Transverse colon (tissue), 4 donors: ENCODE measurements at regions of chr11 and their contacts with region 1.

Region 1: DNA sequence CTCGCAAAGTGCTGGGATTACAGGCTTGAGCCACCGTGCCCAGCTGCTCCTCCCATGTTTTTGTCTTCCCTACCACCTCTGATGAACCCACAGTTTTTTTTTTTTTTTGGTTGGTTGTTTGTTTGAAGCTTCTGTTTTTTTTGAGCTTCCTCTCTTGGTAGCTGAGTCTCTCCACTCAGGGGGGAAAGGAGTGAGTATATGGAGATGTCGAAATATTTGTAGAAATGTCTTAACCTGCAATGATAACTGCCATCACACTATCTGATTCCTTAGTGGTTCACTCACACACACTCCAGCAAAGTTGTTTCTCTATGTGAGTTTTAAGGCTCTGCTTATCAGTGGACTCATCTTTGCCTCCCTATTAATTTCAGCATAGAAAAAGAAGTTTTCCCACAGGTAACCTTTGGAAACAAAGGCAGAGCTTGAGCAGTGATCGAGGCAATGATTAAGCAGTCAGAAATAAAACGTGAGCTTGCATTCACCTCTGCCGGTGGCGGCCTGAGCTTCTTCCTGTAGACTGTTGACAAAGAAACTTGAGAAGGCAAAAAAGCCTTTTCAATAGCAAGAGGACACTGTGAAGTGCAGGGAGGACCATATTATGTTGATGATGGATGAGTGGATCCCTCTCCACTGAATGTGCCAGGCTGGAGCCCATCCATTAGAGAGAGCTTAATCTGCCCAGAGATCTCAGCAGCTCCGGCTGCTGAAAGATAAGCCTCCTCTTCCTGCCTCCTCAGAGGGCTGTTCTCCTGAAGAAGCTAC is 29.0 kb upstream of the RASSF10 start:
- DNase-seq: no peak
- H3K4me3 ChIP-seq: no peak overlapping the region
- H3K27ac ChIP-seq: no peak overlapping the region
- H3K4me1 ChIP-seq: no peaks in the 10 kb centered on the region
- H3K27me3 ChIP-seq: no peaks in the 10 kb centered on the region
- CTCF ChIP-seq: no peak
- EP300 ChIP-seq: no peak
- POLR2A ChIP-seq: no peak

Region 2: GRCh38 chr11:12809864-12810567 is 170.1 kb before region 1 on chr11:
- in situ Hi-C with region 1: no loop called
- intact Hi-C with region 1: no loop called
- DNase-seq: no peak
- H3K4me3 ChIP-seq: no peak overlapping the region
- H3K27ac ChIP-seq: no peak overlapping the region
- H3K4me1 ChIP-seq: peaks cover 14 to 40% (median 22%) of the 10 kb centered on the region in 4 donors
- H3K27me3 ChIP-seq: no peaks in the 10 kb centered on the region
- CTCF ChIP-seq: no peak
- EP300 ChIP-seq: no peak
- POLR2A ChIP-seq: no peak

Region 3: DNA sequence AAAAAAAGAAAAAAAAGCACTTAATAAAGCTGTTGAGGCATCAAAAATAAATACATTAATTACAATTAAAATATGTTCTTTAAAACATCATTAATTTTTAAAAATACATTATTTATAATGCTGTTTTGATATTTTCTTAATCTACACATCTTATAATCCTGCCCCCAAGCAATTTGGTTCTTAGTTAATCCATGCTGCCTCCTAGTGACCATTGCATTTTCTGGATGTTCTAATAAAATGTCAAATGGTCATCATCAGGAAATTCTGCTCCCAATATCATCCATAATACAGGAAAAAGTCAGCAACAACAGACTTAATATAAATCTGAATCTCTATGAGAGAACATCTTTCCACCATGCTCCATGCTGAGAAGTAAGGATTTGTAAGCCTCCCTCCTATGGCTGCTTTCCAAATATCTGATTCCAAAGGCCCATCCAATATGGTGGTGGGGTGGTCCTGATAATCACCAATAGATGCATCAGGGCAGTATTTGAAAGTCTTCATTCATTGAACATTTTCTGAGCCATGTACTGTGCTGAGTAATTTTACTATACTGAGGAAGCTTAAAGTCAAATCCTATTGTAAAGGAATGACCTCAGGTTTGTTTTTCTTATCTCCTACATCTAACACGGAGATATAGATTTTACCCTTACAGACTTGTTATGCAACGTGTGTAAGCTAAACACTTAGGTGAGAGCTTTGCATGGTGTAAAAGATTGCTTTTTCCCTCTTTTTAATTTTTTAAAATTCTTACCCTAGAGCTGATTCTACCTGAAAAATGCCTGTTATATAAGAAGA is 172.8 kb after region 1 on chr11:
- in situ Hi-C with region 1: loop called in 1 of 4 experiments (anchors 10 kb)
- intact Hi-C with region 1: no loop called
- DNase-seq: no peak
- H3K4me3 ChIP-seq: no peak overlapping the region
- H3K27ac ChIP-seq: no peak overlapping the region
- H3K4me1 ChIP-seq: no peaks in the 10 kb centered on the region
- H3K27me3 ChIP-seq: no peaks in the 10 kb centered on the region
- CTCF ChIP-seq: peak; percentile 24 to 55 (median 41)
- EP300 ChIP-seq: no peak
- POLR2A ChIP-seq: no peak

Region 4: DNA sequence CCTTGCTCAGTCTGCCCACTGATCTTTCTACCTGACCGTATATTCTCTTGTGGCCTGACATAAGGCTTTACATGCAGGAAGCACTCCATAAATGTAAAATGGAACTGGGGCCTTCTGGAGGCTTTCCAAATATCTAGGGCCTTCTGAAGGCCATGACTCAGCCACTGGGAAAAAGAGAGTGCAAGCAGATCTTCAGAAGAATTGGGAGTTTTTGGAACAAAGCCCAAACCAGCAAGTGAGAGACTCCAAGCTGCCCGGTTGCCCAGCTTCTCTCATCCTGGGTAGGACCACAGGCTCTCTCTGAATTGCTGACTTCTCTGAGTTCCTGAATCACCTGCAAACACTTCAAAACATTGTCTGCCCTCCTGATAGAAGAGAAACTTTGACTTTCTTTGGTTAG is 189.6 kb after region 1 on chr11:
- in situ Hi-C with region 1: loop called in 1 of 4 experiments (anchors 10 kb)
- intact Hi-C with region 1: no loop called
- DNase-seq: no peak
- H3K4me3 ChIP-seq: no peak overlapping the region
- H3K27ac ChIP-seq: no peak overlapping the region
- H3K4me1 ChIP-seq: no peaks in the 10 kb centered on the region
- H3K27me3 ChIP-seq: no peaks in the 10 kb centered on the region
- CTCF ChIP-seq: no peak
- EP300 ChIP-seq: no peak
- POLR2A ChIP-seq: no peak